A549 (cell line): ENCODE measurements at regions of chr2 and their contacts with region 1.

Region 1: GRCh38 chr2:102020596-102021181 is 28.9 kb downstream of the IL1R2 start:
- DNase-seq: peak; percentile 53 to 87
- ATAC-seq: peak; percentile 98
- H3K4me3 ChIP-seq: no peak overlapping the region
- H3K27ac ChIP-seq: peak overlapping the region; percentile 85 to 87
- H3K4me1 ChIP-seq: peaks cover 39% of the 10 kb centered on the region
- CTCF ChIP-seq: peak; percentile 95
- EP300 ChIP-seq: no peak
- POLR2A ChIP-seq: no peak
- RAD21 ChIP-seq: peak; percentile 99

Region 2: DNA sequence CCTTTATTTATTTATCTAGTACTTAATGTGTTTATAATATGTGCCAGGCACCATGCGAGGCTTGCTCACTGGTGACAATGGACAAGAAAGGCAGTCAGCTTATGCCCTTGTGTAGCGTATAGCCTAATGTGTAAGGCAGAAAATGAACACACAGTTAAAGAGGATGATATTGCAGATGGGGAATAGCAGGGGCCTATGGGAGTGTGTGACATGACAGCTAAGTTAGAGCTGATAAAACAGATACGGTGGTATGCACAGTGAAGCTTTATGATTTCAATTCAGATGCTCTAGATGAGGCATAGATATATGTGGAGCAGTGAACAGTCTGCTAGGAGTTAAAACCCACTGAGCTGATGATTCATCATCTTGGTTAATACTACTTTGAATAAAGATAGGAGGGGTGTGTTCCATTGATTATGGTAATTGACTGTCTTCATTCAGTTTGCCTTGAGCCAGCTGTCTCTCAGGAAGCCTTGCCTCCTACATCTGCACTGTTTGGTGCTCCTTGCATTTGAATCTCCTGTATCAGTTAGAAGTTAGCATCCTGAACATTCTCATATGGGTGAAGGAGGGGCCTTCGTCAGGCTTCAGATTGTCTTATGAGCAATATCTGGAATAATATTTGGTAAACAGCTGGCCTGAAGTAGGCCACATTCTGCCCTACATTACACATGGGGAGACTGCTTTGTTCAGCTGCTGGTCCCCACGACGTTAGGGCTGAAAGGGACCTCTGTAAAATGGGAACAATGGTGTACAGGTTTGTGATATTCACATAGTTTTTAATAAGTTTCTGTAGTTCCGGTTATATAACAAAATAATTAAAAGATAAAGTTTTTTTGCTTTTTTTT is 310.0 kb before region 1 on chr2:
- CTCF ChIA-PET with region 1: no interaction called
- POLR2A ChIA-PET with region 1: no interaction called
- DNase-seq: no peak
- ATAC-seq: peak in 1 of 2 experiments; percentile 44; a peak in 4 of 6 replicates
- H3K4me3 ChIP-seq: no peak overlapping the region
- H3K27ac ChIP-seq: no peak overlapping the region
- H3K4me1 ChIP-seq: peaks cover 28% of the 10 kb centered on the region
- CTCF ChIP-seq: no peak
- EP300 ChIP-seq: no peak
- POLR2A ChIP-seq: no peak
- RAD21 ChIP-seq: no peak

Region 3: GRCh38 chr2:101986804-101987740 is 33.6 kb before region 1 on chr2:
- CTCF ChIA-PET with region 1: no interaction called
- POLR2A ChIA-PET with region 1: no interaction called
- DNase-seq: no peak
- ATAC-seq: no peak
- H3K4me3 ChIP-seq: no peak overlapping the region
- H3K27ac ChIP-seq: no peak overlapping the region
- H3K4me1 ChIP-seq: no peaks in the 10 kb centered on the region
- CTCF ChIP-seq: no peak
- EP300 ChIP-seq: no peak
- POLR2A ChIP-seq: no peak
- RAD21 ChIP-seq: no peak

Region 4: GRCh38 chr2:101998896-101999789 is 21.5 kb before region 1 on chr2:
- CTCF ChIA-PET with region 1: interaction called, 20 read pairs
- POLR2A ChIA-PET with region 1: no interaction called
- DNase-seq: peak; percentile 27 to 33
- ATAC-seq: peak; percentile 63 to 78
- H3K4me3 ChIP-seq: no peak overlapping the region
- H3K27ac ChIP-seq: peak overlapping the region; percentile 24 to 37; a peak in 1 of 6 replicates
- H3K4me1 ChIP-seq: peaks cover 16% of the 10 kb centered on the region; the same call in 2 of the 3 replicates
- CTCF ChIP-seq: no peak
- EP300 ChIP-seq: no peak
- POLR2A ChIP-seq: no peak
- RAD21 ChIP-seq: no peak

Region 5: GRCh38 chr2:102033031-102033749 is 12.5 kb after region 1 on chr2:
- CTCF ChIA-PET with region 1: interaction called, 18 read pairs
- POLR2A ChIA-PET with region 1: no interaction called
- DNase-seq: peak in 1 of 2 experiments; percentile 67
- ATAC-seq: peak; percentile 65 to 86
- H3K4me3 ChIP-seq: no peak overlapping the region
- H3K27ac ChIP-seq: peak overlapping the region; percentile 71 to 82
- H3K4me1 ChIP-seq: peaks cover 32% of the 10 kb centered on the region
- CTCF ChIP-seq: no peak
- EP300 ChIP-seq: no peak
- POLR2A ChIP-seq: no peak
- RAD21 ChIP-seq: no peak

Region 6: DNA sequence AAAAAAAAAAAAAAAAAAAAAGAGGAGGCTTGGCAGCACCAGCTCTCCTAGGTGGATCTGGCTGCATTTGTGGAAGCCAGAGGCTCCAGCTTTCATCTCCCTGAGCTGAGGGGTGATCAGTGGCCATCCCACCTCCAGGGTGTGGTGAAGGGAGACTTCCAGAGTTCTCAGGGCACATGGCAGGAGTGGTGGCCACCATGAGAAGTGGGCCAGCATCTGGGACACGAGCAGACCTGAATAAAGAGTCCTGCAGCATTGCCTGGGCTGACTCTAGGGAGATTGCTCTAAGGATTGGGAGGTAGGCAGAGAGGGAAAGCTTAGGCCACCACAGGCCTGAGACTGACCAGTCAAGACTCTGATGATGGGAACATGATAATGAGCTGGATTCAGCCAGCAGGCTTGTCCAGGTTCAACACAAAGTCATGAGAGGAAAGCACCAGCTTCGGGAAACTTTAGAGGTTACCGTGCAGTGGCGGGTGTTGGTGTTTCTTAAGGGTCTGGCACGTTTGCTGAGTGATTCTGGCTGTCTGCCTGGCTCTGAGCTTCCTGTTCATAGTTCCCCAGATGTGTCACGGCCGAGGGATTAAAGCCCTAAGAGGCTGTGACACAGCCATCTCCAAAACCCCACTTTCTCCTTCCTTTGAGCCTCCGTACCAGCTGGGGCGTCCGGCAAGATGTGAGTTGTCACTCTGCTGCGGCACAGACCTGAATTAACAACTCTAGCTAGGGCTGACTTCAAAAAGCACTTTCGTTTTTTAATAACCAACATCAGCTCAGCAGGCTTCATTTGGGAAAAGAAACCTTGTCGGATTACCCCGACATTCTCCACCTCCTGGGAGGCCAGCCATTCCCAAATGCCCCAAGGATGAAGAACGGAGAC is 83.5 kb after region 1 on chr2:
- CTCF ChIA-PET with region 1: interaction called, 29 read pairs
- POLR2A ChIA-PET with region 1: no interaction called
- DNase-seq: peak in 1 of 2 experiments; percentile 71
- ATAC-seq: peak; percentile 51 to 61
- H3K4me3 ChIP-seq: peak overlapping the region; percentile 41
- H3K27ac ChIP-seq: peak overlapping the region; percentile 96 to 97
- H3K4me1 ChIP-seq: peaks cover 74% of the 10 kb centered on the region
- CTCF ChIP-seq: no peak
- EP300 ChIP-seq: no peak
- POLR2A ChIP-seq: no peak
- RAD21 ChIP-seq: peak in 1 of 2 experiments; percentile 6; a peak in 1 of 5 replicates

Region 7: DNA sequence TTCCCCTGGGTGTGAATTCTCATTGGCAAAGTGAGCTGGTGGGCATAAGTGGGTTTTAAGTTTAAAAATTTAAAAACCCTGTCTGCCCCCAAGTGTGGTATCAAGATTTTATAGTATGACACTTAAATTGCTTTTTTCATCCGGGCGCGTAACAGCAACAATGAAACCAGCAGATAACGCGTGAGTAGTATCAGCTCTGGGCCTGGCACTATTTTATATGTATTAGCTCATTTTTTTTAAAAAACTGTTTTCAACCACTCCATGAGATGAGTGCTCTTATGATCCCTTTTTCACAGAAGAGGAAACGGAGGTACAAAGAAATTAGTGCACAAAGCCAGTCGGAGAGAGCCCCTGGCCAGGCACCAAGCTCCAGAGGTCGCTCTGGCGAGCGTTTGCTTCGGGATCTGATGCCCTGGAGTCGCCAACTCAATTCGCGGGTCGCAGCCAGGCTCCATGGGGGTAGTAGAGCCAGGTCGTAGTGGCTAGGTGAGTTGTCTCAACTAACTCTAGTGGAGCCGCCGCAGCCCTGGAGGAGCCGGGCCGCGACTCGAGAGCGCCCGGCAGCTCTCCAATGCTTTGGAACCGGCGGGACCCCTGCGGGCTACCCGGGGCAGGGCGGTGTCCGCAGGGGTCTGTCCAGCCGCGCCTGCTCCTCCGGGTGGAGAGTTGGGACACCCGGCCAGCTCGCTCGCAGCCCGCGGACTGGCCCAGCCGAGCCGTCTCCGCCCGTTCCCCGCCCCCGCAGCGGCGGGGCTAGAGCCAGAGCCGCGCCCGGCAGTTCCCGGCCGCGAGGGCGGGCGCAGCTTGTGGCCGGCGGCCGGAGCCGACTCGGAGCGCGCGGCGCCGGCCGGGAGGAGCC is 121.5 kb after region 1 on chr2 and contains the start of gene IL1R1:
- CTCF ChIA-PET with region 1: interaction called, 24 read pairs
- POLR2A ChIA-PET with region 1: no interaction called
- DNase-seq: peak; percentile 59 to 67
- ATAC-seq: peak; percentile 89 to 94
- H3K4me3 ChIP-seq: peak within 1 kb of the TSS; percentile 57
- H3K27ac ChIP-seq: peak within 1 kb of the TSS; percentile 86 to 97
- H3K4me1 ChIP-seq: peaks cover 10% of the 10 kb centered on the region
- CTCF ChIP-seq: no peak
- EP300 ChIP-seq: no peak
- POLR2A ChIP-seq: peak; percentile 37
- RAD21 ChIP-seq: peak in 1 of 2 experiments; percentile 22; a peak in 1 of 5 replicates
- polyA plus RNA-seq, gene IL1R1: 34.7 and 38.0 TPM in 2 replicates

Region 8: DNA sequence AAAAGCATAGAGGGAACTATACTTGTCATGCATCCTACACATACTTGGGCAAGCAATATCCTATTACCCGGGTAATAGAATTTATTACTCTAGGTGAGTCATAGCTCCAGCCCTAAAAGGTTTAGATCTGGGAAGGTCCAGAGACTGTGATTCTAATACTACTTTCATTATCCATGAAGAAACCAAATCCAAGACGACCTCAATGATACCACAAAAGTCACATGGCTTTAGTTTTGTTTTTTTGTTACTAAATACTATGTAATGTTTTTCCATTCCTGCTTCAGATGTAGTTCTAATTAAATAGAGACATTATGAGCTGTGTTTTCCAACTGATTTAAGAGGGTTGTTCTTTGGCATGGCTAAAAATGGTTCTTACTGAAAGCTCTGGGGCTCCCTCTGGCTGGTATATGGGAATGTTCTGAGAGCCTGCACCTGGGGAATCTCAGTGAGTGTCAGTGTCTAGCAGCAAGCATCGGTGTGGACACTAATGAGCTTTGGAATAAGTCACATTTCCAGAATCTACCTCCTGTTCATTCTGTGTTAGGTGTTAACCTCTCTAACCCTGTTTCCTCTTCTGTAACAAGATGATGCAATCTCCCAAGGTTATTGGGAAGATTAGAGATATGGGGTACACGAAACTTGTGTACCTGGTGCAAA is 145.6 kb after region 1 on chr2:
- CTCF ChIA-PET with region 1: interaction called, 51 read pairs
- POLR2A ChIA-PET with region 1: no interaction called
- DNase-seq: peak in 1 of 2 experiments; percentile 52
- ATAC-seq: peak; percentile 68 to 78; a peak in 4 of 6 replicates
- H3K4me3 ChIP-seq: no peak overlapping the region
- H3K27ac ChIP-seq: peak overlapping the region; percentile 8 to 49; a peak in 4 of 6 replicates
- H3K4me1 ChIP-seq: peaks cover 11% of the 10 kb centered on the region; the same call in 2 of the 3 replicates
- CTCF ChIP-seq: peak; percentile 66
- EP300 ChIP-seq: no peak
- POLR2A ChIP-seq: no peak
- RAD21 ChIP-seq: peak; percentile 80 to 83

Region 9: GRCh38 chr2:102258386-102259074 is 237.8 kb after region 1 on chr2:
- CTCF ChIA-PET with region 1: interaction called, 10 read pairs
- POLR2A ChIA-PET with region 1: no interaction called
- DNase-seq: peak; percentile 21 to 40
- ATAC-seq: peak; percentile 74 to 92; a peak in 5 of 6 replicates
- H3K4me3 ChIP-seq: no peak overlapping the region
- H3K27ac ChIP-seq: peak overlapping the region; percentile 52 to 54; a peak in 5 of 6 replicates
- H3K4me1 ChIP-seq: peaks cover 3% of the 10 kb centered on the region; the same call in 1 of the 3 replicates
- CTCF ChIP-seq: no peak
- EP300 ChIP-seq: no peak
- POLR2A ChIP-seq: no peak
- RAD21 ChIP-seq: no peak